CD4-positive, alpha-beta T cell (primary cell): ENCODE measurements at regions of chr1 and their contacts with region 1.

Region 1: GRCh38 chr1:185595835-185596667 is 138.1 kb upstream of the HMCN1 start:
- DNase-seq: peak; percentile 33 to 77 (median 44)
- ATAC-seq: peak; percentile 80
- H3K4me3 ChIP-seq: no peak overlapping the region
- H3K4me3 Mint-ChIP-seq: no peak overlapping the region
- H3K27ac ChIP-seq: no peak overlapping the region
- H3K27ac Mint-ChIP-seq: no peak overlapping the region
- H3K4me1 ChIP-seq: peaks cover 7% of the 10 kb centered on the region
- H3K4me1 Mint-ChIP-seq: peaks cover 18% of the 10 kb centered on the region
- H3K27me3 ChIP-seq: no peaks in the 10 kb centered on the region
- H3K27me3 Mint-ChIP-seq: no peaks in the 10 kb centered on the region
- CTCF ChIP-seq: peak; percentile 48

Region 2: DNA sequence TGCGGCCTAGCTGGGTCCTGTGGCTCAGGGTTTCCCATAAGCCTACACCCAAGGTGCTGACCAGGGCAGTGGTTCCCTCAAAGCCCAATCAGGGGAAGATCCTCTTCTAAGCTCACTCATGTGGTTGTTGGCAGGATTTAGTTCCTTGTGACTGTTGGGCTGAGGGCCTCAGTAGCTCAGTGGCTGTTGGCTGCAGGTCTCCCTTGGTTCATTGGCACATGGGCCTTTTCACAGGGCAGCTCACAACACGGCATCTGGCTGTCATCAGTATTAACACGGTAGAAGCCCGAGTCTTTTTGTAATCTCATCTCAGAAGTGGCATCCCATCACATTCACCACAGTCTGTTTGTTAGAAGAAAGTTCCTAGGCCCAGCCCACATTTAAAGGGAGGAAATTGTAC is 50.0 kb before region 1 on chr1:
- CTCF ChIA-PET with region 1: no interaction called
- POLR2A ChIA-PET with region 1: no interaction called
- intact Hi-C with region 1: no loop called
- DNase-seq: no peak
- ATAC-seq: no peak
- H3K4me3 ChIP-seq: no peak overlapping the region
- H3K4me3 Mint-ChIP-seq: no peak overlapping the region
- H3K27ac ChIP-seq: no peak overlapping the region
- H3K27ac Mint-ChIP-seq: no peak overlapping the region
- H3K4me1 ChIP-seq: no peaks in the 10 kb centered on the region
- H3K4me1 Mint-ChIP-seq: no peaks in the 10 kb centered on the region
- H3K27me3 ChIP-seq: no peaks in the 10 kb centered on the region
- H3K27me3 Mint-ChIP-seq: no peaks in the 10 kb centered on the region
- CTCF ChIP-seq: no peak

Region 3: DNA sequence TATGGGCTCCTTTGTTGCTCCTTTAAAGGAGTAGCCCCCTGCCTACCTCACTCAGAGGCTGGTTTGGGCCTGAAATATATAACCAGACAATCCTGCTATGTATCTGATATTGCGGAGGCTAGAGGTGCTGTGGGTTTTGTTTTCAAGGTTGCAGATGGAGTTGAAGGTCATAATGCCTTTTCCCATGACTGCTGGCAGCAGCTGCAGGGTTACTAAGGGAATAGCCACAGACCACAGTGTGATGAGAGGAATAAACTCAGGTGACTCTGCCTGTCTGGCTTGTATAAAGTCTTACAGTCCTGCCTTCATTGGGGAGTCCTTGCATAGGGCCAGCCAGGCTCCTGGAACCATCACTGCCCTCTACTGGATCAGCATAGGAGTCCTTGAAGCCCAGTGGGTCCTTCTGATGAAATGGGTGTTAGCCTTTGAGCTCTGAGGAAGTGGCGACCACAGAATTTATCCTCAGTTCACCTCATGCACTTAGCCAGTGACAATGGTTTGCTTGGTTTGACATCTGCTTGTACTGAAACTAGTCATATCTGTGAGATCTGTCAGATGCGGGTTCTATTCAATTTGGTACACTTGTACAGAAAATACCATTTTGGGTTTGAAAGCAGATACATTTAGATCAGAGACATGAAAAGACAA is 36.2 kb before region 1 on chr1:
- CTCF ChIA-PET with region 1: interaction called, 9 read pairs
- POLR2A ChIA-PET with region 1: interaction called, 16 read pairs
- intact Hi-C with region 1: loop called in 1 of 2 experiments (anchors 5 kb)
- DNase-seq: peak in 10 of 14 experiments; percentile 17 to 84 (median 41)
- ATAC-seq: peak; percentile 69
- H3K4me3 ChIP-seq: no peak overlapping the region
- H3K4me3 Mint-ChIP-seq: peak overlapping the region; percentile 63
- H3K27ac ChIP-seq: peak overlapping the region in 1 of 2 donors; percentile 12
- H3K27ac Mint-ChIP-seq: peak overlapping the region; percentile 63
- H3K4me1 ChIP-seq: peaks cover 33% of the 10 kb centered on the region
- H3K4me1 Mint-ChIP-seq: peaks cover 54% of the 10 kb centered on the region
- H3K27me3 ChIP-seq: no peaks in the 10 kb centered on the region
- H3K27me3 Mint-ChIP-seq: no peaks in the 10 kb centered on the region
- CTCF ChIP-seq: no peak

Region 4: DNA sequence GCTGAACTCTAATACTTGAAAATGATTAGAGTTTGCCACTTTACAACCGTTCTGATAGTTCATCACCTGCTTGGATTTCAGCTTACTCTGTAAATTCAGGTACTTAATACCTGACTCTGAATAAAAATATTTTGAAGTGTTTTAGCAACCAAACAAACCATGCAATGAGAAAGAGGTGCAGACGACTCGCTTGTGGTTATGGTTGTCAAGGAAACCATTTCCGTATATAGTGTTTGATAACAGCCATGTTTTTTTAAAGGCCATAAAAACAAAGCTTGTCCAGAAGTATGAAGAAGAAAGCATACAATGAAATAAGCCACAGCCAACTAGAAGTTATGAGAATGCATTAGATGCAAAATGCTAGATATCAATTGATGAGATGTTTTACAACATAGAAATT is 29.1 kb before region 1 on chr1:
- CTCF ChIA-PET with region 1: interaction called, 18 read pairs
- POLR2A ChIA-PET with region 1: interaction called, 9 read pairs
- intact Hi-C with region 1: loop called in 1 of 2 experiments (anchors 2 kb)
- DNase-seq: peak in 12 of 14 experiments; percentile 15 to 95 (median 38)
- ATAC-seq: peak; percentile 81
- H3K4me3 ChIP-seq: no peak overlapping the region
- H3K4me3 Mint-ChIP-seq: peak overlapping the region; percentile 74
- H3K27ac ChIP-seq: peak overlapping the region; percentile 88 to 91
- H3K27ac Mint-ChIP-seq: peak overlapping the region; percentile 94
- H3K4me1 ChIP-seq: peaks cover 40% of the 10 kb centered on the region
- H3K4me1 Mint-ChIP-seq: peaks cover 92% of the 10 kb centered on the region
- H3K27me3 ChIP-seq: no peaks in the 10 kb centered on the region
- H3K27me3 Mint-ChIP-seq: no peaks in the 10 kb centered on the region
- CTCF ChIP-seq: no peak

Region 5: DNA sequence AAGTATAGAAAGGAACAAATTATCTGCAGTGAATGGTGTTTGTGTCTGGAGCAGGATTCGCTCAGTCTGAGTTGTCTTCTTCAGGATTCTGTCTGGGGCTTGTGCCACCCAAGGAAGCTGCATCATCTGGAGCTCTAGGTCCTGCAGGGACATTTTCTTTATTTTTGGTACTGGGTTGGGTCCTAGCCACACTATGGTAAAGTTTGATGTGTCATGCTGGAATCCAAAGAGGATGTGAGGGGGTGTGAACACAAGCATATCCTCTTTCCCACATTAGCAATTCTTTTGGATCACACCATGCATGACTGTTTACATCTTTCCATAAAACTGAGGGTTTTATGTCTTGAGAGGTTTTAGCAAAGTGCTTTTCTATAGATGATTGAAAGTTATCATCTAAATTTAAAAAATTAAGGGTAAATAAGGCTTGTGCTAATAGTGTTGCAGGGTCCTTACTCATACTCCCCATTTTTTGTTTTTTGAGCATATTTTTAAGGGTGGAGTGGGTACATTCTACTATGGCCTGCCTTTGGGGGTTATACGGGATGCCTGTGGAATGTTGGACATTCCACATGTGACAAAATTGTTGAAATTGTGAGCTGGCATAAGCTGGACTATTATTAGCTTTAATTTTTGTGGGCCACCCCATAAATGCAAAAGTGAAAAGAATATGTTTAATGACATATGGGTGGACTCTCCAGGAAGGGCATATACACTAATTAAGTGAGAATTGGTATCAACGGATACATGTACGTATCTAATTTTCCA is 13.9 kb before region 1 on chr1:
- CTCF ChIA-PET with region 1: interaction called, 13 read pairs
- POLR2A ChIA-PET with region 1: no interaction called
- intact Hi-C with region 1: no loop called
- DNase-seq: no peak
- ATAC-seq: no peak
- H3K4me3 ChIP-seq: no peak overlapping the region
- H3K4me3 Mint-ChIP-seq: no peak overlapping the region
- H3K27ac ChIP-seq: no peak overlapping the region
- H3K27ac Mint-ChIP-seq: no peak overlapping the region
- H3K4me1 ChIP-seq: no peaks in the 10 kb centered on the region
- H3K4me1 Mint-ChIP-seq: no peaks in the 10 kb centered on the region
- H3K27me3 ChIP-seq: no peaks in the 10 kb centered on the region
- H3K27me3 Mint-ChIP-seq: no peaks in the 10 kb centered on the region
- CTCF ChIP-seq: no peak